ENCODE measurements at regions of chr5 and their contacts with region 1.

Region 1: GRCh38 chr5:168434001-168434400 is 52.3 kb upstream of the RARS1 start:
- DNase-seq: no peak
- ATAC-seq: peak in 1 of 4 donors; percentile 39
- H3K4me3 ChIP-seq: no peak overlapping the region
- H3K27ac ChIP-seq: no peak overlapping the region
- H3K4me1 ChIP-seq: no peaks in the 10 kb centered on the region
- H3K27me3 ChIP-seq: no peaks in the 10 kb centered on the region
- CTCF ChIP-seq: no peak
- POLR2A ChIP-seq: no peak

Region 2: GRCh38 chr5:168268949-168269943 is 164.8 kb before region 1 on chr5:
- intact Hi-C with region 1: loop called in 1 of 2 experiments (anchors 10 kb)
- DNase-seq: peak; percentile 83 to 85 (median 84)
- ATAC-seq: peak; percentile 96 to 98 (median 96)
- H3K4me3 ChIP-seq: peak overlapping the region; percentile 26 to 51 (median 35)
- H3K27ac ChIP-seq: peak overlapping the region in 1 of 3 donors; percentile 27
- H3K4me1 ChIP-seq: peaks cover 0 to 5% (median 0%) of the 10 kb centered on the region in 4 donors
- H3K27me3 ChIP-seq: no peaks in the 10 kb centered on the region
- CTCF ChIP-seq: peak; percentile 93 to 96 (median 94)
- POLR2A ChIP-seq: no peak